Heart left ventricle (tissue), 16 donors: ENCODE measurements at regions of chr2 and their contacts with region 1.

Region 1: GRCh38 chr2:240232961-240233893 is 92.8 kb upstream of the OTOS start:
- DNase-seq: peak; percentile 86 to 94 (median 92)
- ATAC-seq: peak; percentile 77 to 83 (median 78)
- H3K4me3 ChIP-seq: peak overlapping the region in 9 of 12 donors; percentile 24 to 46 (median 35)
- H3K27ac ChIP-seq: peak overlapping the region in 9 of 12 donors; percentile 14 to 91 (median 66)
- H3K4me1 ChIP-seq: peaks cover 0 to 54% (median 22%) of the 10 kb centered on the region in 12 donors
- H3K27me3 ChIP-seq: no peaks in the 10 kb centered on the region
- CTCF ChIP-seq: peak; percentile 76 to 91 (median 86)
- POLR2A ChIP-seq: no peak

Region 2: DNA sequence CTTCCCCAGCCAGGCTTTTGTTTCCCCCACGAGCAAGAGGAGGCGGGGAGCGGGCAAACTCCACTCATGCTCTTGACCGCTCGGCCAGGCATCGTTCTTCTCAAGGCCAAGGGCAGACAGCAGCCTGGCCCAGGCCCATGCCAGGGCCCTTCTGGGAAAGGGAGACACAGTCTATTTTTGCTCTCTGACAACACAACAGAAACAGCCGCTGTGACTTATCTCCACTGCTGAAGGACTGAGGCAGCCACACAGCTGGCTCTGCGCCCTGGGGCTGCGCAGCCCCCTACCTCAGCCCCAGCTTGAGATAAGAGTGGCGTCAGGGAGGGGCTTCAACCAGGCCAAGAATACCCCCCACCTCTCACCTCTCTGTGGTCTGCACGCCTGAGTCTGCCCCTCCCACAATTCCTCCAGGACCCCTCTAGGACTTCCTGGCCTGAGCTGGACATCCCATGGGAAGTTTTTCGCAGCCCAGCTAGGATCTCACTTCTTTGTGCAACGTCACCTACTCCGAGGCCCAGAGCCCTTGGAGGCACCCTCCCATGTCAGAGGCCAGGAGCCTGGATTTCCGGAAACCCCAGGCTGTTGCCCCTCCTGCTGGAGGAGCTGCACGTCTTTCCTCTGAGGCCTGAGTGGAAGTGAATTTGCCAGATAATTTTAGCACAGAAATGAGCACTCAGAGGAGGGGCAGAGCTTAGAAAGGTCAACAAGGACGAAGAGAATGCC is 26.1 kb after region 1 on chr2:
- intact Hi-C with region 1: loop called in 4 of 10 experiments (anchors 1 to 2 kb)
- DNase-seq: peak; percentile 79 to 95 (median 85)
- ATAC-seq: peak; percentile 89 to 94 (median 93)
- H3K4me3 ChIP-seq: no peak overlapping the region
- H3K27ac ChIP-seq: peak overlapping the region; percentile 84 to 96 (median 90)
- H3K4me1 ChIP-seq: peaks cover 0 to 36% (median 18%) of the 10 kb centered on the region in 12 donors
- H3K27me3 ChIP-seq: no peaks in the 10 kb centered on the region
- CTCF ChIP-seq: peak in 7 of 12 donors; percentile 14 to 44 (median 24)
- POLR2A ChIP-seq: no peak

Region 3: DNA sequence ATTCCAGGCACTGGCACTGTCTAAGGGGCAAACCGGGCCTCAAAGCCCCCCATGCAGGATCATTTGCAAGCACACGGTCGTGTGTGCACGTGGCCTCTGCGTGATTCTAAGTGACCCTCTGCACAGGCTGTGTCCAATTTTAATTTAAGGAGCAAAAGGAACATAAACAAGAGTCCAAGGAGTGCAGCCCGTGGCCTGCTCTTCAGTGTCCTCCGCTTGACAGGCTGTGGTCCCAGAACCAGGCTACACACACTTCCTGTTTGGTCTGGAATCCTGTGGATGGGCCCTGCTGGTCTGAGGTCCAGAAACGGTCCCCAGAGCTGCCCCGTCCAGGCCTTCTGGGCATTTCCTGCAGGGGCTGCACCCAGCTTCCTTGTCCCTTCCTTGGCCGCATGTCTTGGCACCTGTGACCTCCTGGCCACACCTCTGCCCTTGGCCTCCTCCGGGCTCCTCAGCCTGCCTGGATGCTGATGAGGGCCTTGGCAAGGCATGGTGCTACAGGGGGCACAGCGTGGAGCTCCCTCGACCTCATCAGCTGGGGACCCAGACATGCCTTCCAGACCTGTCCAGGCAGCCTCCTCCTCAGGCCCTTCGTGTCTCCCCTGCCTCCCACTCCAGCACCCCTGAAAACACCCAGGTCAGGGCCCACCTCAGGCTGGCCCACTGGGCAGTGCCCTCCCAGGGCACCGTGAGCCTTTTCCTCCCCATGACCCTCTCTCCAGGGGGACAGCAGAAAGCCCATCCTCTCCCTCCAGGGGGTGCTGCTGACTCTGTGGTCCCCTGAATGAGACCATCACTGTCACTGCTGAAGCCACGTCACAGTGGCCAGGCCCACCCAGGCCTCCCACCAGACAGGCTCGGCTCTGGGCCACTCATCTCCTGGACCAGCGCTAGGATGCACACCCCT is 65.8 kb after region 1 on chr2:
- intact Hi-C with region 1: loop called in 6 of 10 experiments (anchors 1 to 10 kb)
- DNase-seq: peak in 1 of 5 donors; percentile 18
- ATAC-seq: no peak
- H3K4me3 ChIP-seq: no peak overlapping the region
- H3K27ac ChIP-seq: no peak overlapping the region
- H3K4me1 ChIP-seq: peaks cover 0 to 35% (median 6%) of the 10 kb centered on the region in 12 donors
- H3K27me3 ChIP-seq: peaks cover 0 to 3% (median 0%) of the 10 kb centered on the region in 9 donors
- CTCF ChIP-seq: no peak
- POLR2A ChIP-seq: no peak

Region 4: DNA sequence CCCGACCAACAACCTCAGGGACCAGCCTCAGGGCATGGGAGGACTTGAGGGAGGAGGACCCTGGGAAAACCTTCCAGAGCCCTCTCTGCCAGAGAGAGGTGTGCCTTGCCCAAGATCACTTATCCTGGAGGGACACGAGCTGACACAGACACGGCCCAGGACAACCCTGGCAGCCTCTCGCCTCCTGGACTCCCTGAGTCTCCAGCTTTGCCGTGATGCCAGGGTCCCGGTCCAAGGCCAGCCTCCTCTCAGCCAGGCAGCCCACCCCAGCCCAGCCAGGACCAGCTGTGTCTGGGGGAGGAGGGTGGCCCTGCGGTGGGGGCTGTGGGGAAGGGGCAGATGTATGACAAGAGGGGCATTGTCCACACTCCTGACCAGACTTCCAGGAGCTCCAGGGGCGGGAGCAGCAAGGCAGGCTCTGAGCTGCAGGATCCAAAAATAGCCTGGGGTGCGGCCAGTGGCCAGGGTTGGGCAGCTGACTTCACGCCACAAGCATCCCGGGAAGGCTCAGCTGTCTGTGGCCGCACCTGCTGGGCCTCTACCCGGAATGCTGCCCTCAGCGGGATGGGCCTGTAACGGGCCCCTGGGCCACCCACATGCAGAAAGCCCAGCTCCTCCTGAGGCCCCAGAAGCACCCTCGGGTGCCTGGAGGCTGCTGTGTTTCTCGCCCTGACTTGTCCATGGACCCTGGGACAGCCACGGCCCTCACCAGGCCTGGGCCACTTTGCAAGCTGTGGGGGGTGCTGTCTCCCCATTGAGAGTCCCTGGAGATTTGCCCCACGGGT is 136.8 kb after region 1 on chr2:
- intact Hi-C with region 1: loop called in 5 of 10 experiments (anchors 1 to 10 kb)
- DNase-seq: peak; percentile 85 to 91 (median 86)
- ATAC-seq: peak; percentile 75 to 90 (median 84)
- H3K4me3 ChIP-seq: no peak overlapping the region
- H3K27ac ChIP-seq: peak overlapping the region; percentile 75 to 99 (median 92)
- H3K4me1 ChIP-seq: peaks cover 0 to 74% (median 31%) of the 10 kb centered on the region in 12 donors
- H3K27me3 ChIP-seq: no peaks in the 10 kb centered on the region
- CTCF ChIP-seq: peak in 2 of 12 donors; percentile 9 to 13
- POLR2A ChIP-seq: no peak

Region 5: GRCh38 chr2:240560480-240561326 is 327.5 kb after region 1 on chr2:
- intact Hi-C with region 1: loop called in 1 of 10 experiments (anchors 10 kb)
- DNase-seq: peak; percentile 100
- ATAC-seq: peak; percentile 86 to 95 (median 92)
- H3K4me3 ChIP-seq: peak overlapping the region; percentile 43 to 94 (median 90)
- H3K27ac ChIP-seq: peak overlapping the region; percentile 99 to 100 (median 100)
- H3K4me1 ChIP-seq: peaks cover 7 to 81% (median 45%) of the 10 kb centered on the region in 12 donors
- H3K27me3 ChIP-seq: peaks cover 0 to 3% (median 0%) of the 10 kb centered on the region in 9 donors
- CTCF ChIP-seq: peak in 11 of 12 donors; percentile 11 to 52 (median 28)
- POLR2A ChIP-seq: peak; percentile 14 to 77